ENCODE measurements at regions of chr6 and their contacts with region 1.

Region 1: DNA sequence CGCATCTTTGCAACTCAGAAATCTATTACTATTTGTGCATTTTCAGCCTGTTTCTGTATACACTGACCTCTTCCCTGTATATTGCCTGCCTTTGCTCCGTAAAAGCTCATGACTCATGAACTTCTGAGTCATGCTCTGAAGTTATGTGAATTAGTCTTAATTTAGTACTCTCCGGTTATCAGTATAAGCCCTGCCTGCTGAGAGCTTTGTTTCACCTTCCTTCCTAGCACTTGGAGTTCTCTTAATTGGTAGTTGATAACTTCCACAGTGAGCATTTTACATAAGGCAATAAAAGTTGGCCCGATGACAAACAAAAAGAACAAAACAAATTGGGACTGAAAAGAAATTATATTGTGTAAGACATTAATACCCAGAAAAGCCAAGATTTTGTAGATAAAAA is 231.4 kb downstream of the GJA1 start:
- DNase-seq: peak; percentile 35
- ATAC-seq: peak; percentile 79; the same call in 1 of the 2 replicates
- H3K4me3 ChIP-seq: no peak overlapping the region
- H3K27ac ChIP-seq: no peak overlapping the region
- H3K4me1 ChIP-seq: no peaks in the 10 kb centered on the region
- H3K27me3 ChIP-seq: no peaks in the 10 kb centered on the region
- CTCF ChIP-seq: no peak

Region 2: DNA sequence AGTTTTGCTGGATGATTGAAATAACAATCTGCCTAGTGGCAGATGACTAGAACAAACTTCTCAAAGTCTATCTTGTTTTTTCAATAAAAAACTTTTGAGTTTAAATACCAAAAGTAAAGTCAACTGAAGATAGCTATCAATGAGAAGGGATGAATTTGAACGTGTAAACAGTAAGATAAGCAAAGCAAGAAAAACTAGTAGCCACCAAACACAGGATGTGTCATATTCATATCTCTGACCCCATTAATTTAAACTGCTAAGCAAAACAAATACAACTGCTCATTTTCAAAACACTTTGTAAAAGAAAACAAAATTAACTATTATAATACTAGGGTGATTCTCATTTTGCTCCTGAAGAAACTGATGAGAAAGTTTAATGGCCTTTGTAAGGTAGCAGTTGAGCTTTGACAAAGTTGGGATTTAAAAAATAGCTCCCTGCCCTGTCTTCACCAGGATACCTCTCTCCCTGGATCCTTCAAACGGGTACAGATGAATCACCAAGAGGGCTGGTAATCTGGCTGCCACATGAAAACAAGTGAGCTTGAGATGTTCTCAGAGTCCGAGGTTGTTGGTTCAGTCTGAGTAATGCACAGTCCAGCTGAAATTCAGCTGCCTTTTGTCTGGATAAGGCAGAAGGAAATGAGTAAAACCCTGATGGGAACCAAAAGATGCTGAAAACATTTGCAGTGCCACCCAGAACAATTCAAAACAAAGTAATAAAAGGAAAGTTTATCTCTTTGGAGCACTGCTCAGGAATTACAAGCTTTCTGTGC is 144.7 kb before region 1 on chr6:
- CTCF ChIA-PET with region 1: no interaction called
- POLR2A ChIA-PET with region 1: no interaction called
- in situ Hi-C with region 1: no loop called
- intact Hi-C with region 1: no loop called
- DNase-seq: peak; percentile 82
- ATAC-seq: peak; percentile 75
- H3K4me3 ChIP-seq: no peak overlapping the region
- H3K27ac ChIP-seq: no peak overlapping the region
- H3K4me1 ChIP-seq: no peaks in the 10 kb centered on the region
- H3K27me3 ChIP-seq: no peaks in the 10 kb centered on the region
- CTCF ChIP-seq: no peak

Region 3: DNA sequence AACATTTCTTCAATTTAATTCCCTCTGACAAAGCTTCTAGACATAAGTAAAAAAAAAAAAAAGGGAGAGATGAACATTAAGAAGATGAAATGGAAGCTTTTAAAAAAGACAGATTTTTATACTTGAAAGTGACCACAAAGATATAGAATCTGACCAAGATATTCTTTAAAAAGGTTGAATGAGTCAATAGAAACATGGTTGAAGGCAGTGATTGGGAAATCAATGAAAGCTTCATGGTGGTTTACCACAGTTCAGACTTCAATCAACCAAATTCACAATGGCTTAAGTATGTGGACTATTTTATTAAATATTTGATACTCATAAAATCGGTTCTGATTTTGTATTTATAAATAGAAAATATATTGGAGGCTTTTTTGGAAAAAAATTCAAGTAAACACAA is 484.3 kb after region 1 on chr6:
- CTCF ChIA-PET with region 1: no interaction called
- POLR2A ChIA-PET with region 1: interaction called, 10 read pairs
- in situ Hi-C with region 1: no loop called
- intact Hi-C with region 1: no loop called
- DNase-seq: no peak
- ATAC-seq: no peak
- H3K4me3 ChIP-seq: no peak overlapping the region
- H3K27ac ChIP-seq: no peak overlapping the region
- H3K4me1 ChIP-seq: no peaks in the 10 kb centered on the region
- H3K27me3 ChIP-seq: no peaks in the 10 kb centered on the region
- CTCF ChIP-seq: no peak

Measured in Panc1 (cell line).